OCI-LY7 (cell line): ENCODE measurements at regions of chr6 and their contacts with region 1.

Region 1: DNA sequence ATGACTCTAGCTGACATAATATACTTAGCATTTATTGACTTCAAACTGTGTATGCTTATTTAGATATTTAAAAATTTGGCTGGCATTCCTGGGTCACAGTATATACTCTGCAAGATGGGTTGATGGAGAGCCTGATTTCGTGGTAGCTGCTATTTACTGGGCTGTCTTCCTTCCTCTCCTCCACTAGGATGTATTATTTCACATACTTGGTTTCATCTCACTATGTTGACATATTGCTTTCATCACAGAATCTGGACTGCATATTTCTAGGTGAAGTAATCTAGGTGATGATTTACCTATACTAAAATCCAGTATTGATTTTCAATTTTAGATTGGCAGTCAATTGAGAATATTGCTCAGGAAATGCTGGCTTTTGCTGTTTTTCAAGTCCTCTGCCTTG is 15.7 kb downstream of the AFDN start:
- DNase-seq: no peak
- H3K4me3 ChIP-seq: no peak overlapping the region
- H3K27ac ChIP-seq: no peak overlapping the region
- H3K4me1 ChIP-seq: no peaks in the 10 kb centered on the region
- CTCF ChIP-seq: no peak

Region 2: DNA sequence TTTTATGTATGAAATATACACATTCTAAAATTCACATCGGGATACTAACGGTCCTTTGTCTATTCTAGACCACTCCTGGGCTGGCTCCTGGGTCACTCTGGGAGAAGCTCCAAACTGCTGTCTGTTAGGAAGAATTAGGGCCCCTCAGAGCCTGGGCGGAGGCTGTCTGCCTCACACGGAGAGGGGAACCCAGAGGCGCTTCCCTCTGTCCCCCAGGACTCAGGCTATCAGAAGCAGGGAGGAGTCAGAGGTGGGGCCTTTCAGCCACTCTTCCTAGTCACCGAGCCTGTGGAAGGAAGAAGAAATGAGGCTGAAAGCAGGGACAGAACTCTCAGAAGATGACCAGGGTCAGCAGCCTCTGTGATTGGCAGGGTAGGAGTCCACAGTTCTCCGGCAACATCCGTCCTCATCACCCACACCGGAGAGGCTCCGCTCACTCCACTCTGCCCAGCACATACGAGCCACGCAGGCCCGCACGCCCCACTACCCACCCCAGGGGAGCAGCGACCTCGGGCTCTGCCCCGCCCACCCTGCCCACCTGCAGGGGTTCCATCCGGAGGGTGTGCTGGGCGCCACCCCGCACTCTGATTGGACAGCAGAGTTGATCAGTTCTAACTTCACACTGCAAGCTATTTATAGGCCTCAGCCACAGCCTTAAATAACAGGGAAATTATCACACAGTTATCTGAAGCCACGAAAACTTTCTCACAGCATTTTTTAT is 197.9 kb before region 1 on chr6:
- CTCF ChIA-PET with region 1: no interaction called
- POLR2A ChIA-PET with region 1: no interaction called
- intact Hi-C with region 1: no loop called
- DNase-seq: no peak
- H3K4me3 ChIP-seq: no peak overlapping the region
- H3K27ac ChIP-seq: no peak overlapping the region
- H3K4me1 ChIP-seq: no peaks in the 10 kb centered on the region
- CTCF ChIP-seq: no peak

Region 3: DNA sequence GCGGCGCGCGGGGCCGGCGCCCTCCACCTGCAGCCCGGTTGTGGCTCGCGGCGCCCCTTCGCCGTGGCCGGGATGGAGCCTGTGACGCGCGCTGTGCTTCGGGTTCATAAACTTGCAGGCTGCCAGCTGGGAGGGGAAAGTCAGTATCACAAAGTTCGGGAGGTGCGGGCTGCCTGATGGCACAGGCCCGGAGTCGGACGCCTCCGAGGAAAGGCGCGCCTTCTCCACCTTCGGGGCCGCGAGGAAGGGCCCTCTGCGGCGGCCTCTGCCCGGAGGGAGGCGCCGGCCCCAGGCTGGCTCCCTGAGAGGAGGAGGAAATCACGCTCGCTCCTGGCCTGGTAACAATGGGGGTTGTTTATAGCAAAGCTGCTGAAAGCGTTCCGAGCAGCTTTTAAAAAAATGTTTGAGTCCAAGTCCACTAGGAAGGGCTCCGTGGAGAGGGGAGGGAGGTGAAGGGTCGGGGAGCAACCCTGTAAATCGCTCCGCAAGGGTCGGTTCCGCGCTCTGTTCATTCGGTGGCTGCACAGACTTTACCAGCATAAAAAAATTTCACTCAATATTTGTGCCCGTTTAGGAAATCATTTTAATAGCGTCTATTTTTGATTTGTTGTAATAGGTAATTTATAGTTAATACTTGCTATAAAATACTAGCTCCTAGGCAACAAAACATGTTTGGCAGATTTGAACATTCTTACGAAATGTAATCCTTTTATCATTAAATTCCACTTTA is 14.7 kb before region 1 on chr6:
- CTCF ChIA-PET with region 1: interaction called, 3 read pairs
- POLR2A ChIA-PET with region 1: interaction called, 18 read pairs
- intact Hi-C with region 1: no loop called
- DNase-seq: peak; percentile 51
- H3K4me3 ChIP-seq: peak overlapping the region; percentile 72
- H3K27ac ChIP-seq: no peak overlapping the region
- H3K4me1 ChIP-seq: peaks cover 24% of the 10 kb centered on the region
- CTCF ChIP-seq: no peak